GM13976 (cell line): ENCODE measurements at regions of chr3 and their contacts with region 1.

Region 1: DNA sequence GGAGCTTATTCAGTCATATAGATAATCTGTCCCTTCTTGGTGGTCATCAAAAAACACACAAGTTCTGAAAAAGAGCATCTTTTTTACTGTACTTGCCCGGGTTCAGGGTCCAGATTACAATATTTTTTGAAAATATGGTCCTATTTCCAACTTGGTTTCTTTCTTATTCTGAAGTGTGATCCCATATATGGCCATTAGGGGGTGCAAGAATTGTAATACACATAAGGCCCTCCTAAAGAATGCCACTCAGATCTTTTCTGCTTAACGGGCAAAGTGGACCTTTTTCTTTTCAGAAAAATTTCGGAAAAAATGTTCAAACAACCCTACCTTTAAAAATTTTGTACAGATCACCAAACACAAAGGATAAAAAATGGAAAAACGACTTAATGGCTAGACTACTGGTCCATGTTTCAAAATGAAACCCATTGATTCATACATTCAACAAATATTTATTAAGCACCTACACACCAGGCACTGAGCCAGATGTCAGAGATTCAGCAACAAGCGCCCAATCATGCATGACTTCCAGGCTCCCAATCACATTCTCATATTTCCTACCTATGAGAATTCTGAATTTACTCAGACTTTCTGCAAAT is 102.0 kb upstream of the MYRIP start:
- DNase-seq: peak; percentile 48
- CTCF ChIP-seq: peak; percentile 37

Region 2: DNA sequence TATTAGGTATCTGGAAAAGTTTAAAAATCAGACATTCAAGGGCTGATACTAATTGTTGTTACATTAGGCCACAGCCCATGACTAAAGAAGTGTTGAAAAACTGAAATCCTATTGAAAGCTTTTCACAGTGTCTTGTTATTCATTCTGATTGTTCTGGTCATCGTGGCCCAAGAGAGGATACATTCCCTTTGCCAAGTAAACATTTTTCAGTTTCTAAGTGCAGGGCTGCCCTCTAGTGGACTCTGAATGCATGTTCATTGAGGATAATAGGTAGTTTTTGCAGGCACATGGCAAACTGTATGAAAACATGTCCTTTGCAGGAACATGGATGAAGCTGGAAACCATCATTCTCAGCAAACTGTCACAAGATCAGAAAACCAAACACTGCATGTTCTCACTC is 283.1 kb after region 1 on chr3:
- in situ Hi-C with region 1: loop called (anchors 25 kb)
- DNase-seq: peak; percentile 43
- CTCF ChIP-seq: peak; percentile 59